Aorta (tissue), 5 donors: ENCODE measurements at regions of chr2 and their contacts with region 1.

Region 1: DNA sequence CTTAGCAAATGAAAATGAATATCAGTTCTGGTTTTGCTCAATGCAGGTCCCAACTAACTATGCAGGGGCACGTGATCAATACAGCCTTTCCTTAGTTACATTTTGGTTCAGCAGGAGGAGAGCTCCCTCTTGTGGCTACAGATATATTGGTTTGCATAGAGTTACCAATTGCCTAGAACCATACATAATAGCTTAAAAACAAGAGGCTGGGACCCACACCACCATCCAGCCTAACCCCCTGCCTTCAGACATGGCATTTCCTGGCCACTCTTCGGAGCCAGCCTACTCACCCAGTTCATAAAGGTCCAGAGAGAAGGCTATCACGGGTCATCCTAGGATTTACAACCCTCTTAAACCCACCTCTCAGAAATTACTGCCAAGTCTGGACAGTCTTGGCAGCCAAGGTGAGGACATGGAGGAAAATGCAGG is 10.5 kb downstream of the CCDC93 start:
- DNase-seq: no peak
- ATAC-seq: peak; percentile 87
- H3K4me3 ChIP-seq: no peak overlapping the region
- H3K27ac ChIP-seq: no peak overlapping the region
- H3K4me1 ChIP-seq: no peaks in the 10 kb centered on the region
- H3K27me3 ChIP-seq: no peaks in the 10 kb centered on the region

Region 2: GRCh38 chr2:117814417-117815264 is 188.8 kb before region 1 on chr2 and contains the start of gene DDX18:
- intact Hi-C with region 1: loop called (anchors 5 kb)
- DNase-seq: peak; percentile 98 to 99
- ATAC-seq: peak; percentile 100
- H3K4me3 ChIP-seq: peak within 1 kb of the TSS; percentile 67 to 93
- H3K27ac ChIP-seq: peak within 1 kb of the TSS; percentile 17 to 94
- H3K4me1 ChIP-seq: no peaks in the 10 kb centered on the region
- H3K27me3 ChIP-seq: no peaks in the 10 kb centered on the region
- total RNA-seq, gene DDX18: 42.2 to 54.3 TPM

Region 3: GRCh38 chr2:117835990-117836760 is 167.2 kb before region 1 on chr2:
- intact Hi-C with region 1: loop called (anchors 5 kb)
- DNase-seq: peak; percentile 90 to 94
- ATAC-seq: peak; percentile 93
- H3K4me3 ChIP-seq: peak overlapping the region; percentile 17 to 23
- H3K27ac ChIP-seq: no peak overlapping the region
- H3K4me1 ChIP-seq: no peaks in the 10 kb centered on the region
- H3K27me3 ChIP-seq: no peaks in the 10 kb centered on the region